ENCODE measurements at regions of chr17 and their contacts with region 1.

Region 1: DNA sequence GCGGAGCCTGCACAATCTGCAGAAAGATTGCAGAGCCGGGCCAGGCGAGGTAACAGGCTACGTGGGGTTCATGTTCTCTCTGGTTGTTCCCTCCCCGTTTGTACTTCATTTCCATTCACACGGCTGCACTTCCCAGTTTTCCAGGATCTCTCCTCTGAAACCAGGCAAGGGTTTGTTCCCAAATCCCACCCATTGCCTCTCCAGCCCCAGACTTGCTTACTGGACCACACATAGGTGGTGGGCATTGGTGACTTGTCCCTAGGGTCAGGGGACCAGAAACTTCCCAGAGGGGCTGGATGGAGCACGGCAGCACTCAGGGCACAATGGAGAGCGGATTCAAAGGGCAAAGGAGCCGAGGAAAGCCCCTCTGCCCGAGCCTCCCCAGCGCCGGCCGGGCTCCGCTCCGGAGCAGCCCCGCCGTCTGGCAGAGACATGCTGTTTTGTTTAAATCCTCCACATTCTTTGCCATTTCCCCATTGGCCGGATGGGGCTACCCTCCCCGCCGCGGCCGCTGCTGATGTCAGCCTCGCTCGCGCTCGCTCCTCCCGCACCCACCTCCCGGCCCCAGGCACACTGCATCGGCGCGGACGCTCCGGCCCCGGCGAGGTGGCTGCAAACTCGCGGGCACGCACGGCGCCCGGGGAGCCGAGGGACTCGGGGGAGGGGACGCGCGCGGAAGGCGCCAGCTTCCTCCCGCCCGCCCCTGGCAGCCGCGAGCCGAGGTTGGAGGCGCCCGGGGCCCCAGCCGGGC is at the start of gene PITPNC1:
- DNase-seq: peak; percentile 85
- H3K4me3 ChIP-seq: peak within 1 kb of the TSS; percentile 59 to 97 (median 96)
- H3K27ac ChIP-seq: peak within 1 kb of the TSS; percentile 72
- H3K4me1 ChIP-seq: peaks cover 12% of the 10 kb centered on the region
- H3K27me3 ChIP-seq: no peaks in the 10 kb centered on the region
- CTCF ChIP-seq: no peak
- total RNA-seq, gene PITPNC1: 5.7 to 35.8 TPM

Region 2: GRCh38 chr17:67276075-67276474 is 100.8 kb before region 1 on chr17:
- CTCF ChIA-PET with region 1: no interaction called
- dilution Hi-C with region 1: no loop called
- in situ Hi-C with region 1: no loop called
- intact Hi-C with region 1: loop called (anchors 5 kb)
- DNase-seq: no peak
- H3K4me3 ChIP-seq: no peak overlapping the region
- H3K27ac ChIP-seq: no peak overlapping the region
- H3K4me1 ChIP-seq: peaks cover 12% of the 10 kb centered on the region
- H3K27me3 ChIP-seq: no peaks in the 10 kb centered on the region
- CTCF ChIP-seq: peak; percentile 13 to 50

Region 3: GRCh38 chr17:67475236-67475937 is 98.5 kb after region 1 on chr17:
- CTCF ChIA-PET with region 1: interaction called, 6 read pairs
- dilution Hi-C with region 1: no loop called
- in situ Hi-C with region 1: no loop called
- intact Hi-C with region 1: loop called (anchors 1 kb)
- DNase-seq: peak; percentile 64
- H3K4me3 ChIP-seq: no peak overlapping the region
- H3K27ac ChIP-seq: no peak overlapping the region
- H3K4me1 ChIP-seq: peaks cover 24% of the 10 kb centered on the region
- H3K27me3 ChIP-seq: no peaks in the 10 kb centered on the region
- CTCF ChIP-seq: peak; percentile 99

Region 4: DNA sequence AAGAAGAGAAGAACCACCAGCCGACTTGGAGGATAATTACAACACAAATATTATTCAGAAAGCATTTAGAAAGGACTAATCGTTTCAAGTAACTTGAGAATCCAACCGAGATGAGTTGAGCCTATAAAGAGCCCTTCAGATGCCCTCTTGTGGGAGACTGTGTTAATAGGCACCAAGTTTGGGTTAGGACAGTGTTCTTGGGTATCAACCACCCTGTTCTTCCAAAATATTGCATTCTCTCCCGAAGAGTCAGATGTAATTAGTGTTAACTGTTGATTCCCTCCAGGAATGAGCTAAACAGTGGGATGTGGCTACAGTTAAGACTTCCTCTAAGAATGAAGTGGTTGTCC is 253.0 kb after region 1 on chr17:
- CTCF ChIA-PET with region 1: no interaction called
- dilution Hi-C with region 1: no loop called
- in situ Hi-C with region 1: loop called in 1 of 2 experiments (anchors 10 kb)
- intact Hi-C with region 1: loop called (anchors 1 kb)
- DNase-seq: peak; percentile 38
- H3K4me3 ChIP-seq: no peak overlapping the region
- H3K27ac ChIP-seq: no peak overlapping the region
- H3K4me1 ChIP-seq: no peaks in the 10 kb centered on the region
- H3K27me3 ChIP-seq: no peaks in the 10 kb centered on the region
- CTCF ChIP-seq: peak; percentile 29 to 50

Region 5: DNA sequence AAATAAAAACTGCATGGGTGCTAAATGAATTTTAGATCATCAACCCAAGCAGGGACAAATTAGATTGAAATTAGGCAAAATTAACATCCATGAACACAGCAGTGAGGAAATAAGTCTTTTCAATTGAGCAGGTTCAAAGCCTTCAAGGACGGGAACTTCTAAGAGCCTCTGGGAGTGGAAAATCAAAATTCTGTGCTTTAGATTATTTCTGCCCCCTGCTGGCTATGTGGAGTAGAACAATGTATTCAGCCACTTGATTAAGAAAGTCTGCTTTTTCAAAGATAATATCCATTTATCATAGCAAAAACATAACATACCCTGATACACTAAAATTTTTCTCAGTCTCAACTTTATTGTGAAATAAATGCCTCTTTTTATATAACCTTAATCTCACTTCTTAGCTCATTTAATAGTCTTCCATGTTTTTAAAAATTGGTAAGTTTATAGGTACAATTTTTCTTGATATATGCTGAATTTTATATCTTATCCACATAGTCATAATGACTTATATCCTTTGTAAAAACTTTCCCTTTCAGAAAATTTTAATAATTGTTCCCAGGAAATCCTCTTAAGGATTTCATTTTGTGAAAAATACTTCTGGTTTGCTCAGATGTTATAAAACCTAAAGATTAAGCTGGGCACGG is 312.7 kb after region 1 on chr17:
- CTCF ChIA-PET with region 1: no interaction called
- dilution Hi-C with region 1: no loop called
- in situ Hi-C with region 1: loop called (anchors 5 to 10 kb)
- intact Hi-C with region 1: loop called (anchors 1 kb)
- DNase-seq: peak; percentile 42
- H3K4me3 ChIP-seq: no peak overlapping the region
- H3K27ac ChIP-seq: no peak overlapping the region
- H3K4me1 ChIP-seq: no peaks in the 10 kb centered on the region
- H3K27me3 ChIP-seq: no peaks in the 10 kb centered on the region
- CTCF ChIP-seq: peak; percentile 67 to 73

Region 6: DNA sequence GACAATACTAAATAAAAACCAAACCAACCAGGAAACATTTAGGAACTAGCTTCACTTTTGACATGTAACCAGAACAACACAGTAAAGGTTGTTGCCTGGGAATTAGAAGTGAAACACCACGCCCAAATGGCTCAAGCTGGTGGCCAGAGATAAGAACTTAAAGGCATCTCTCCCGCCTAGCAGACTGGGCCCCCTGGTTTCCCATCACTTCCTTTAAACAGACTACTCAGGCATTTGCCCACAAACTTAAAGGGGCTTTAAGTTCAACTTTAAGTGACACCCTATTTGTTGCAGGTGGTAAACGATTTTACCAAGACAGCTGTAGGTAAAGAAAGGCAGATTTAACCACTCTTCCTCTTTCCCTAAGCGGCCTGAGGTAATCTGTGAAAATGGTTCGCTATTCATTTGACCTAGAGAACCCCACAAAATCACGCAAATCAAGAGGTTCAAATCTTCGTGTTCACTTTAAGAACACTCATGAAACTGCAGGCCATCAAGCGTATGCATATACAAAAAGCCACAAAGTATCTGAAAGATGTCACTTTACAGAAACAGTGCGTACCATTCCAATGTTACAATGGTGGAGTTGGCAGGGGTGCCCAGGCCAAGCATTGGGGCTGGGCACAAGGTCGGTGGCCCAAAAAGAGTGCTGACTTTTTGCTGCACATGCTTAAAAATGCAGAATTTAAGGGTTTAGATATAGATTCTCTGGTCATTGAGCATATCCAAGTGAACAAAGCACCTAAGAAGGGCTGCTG is 407.6 kb after region 1 on chr17:
- CTCF ChIA-PET with region 1: no interaction called
- dilution Hi-C with region 1: no loop called
- in situ Hi-C with region 1: no loop called
- intact Hi-C with region 1: loop called (anchors 5 kb)
- DNase-seq: no peak
- H3K4me3 ChIP-seq: no peak overlapping the region
- H3K27ac ChIP-seq: no peak overlapping the region
- H3K4me1 ChIP-seq: no peaks in the 10 kb centered on the region
- H3K27me3 ChIP-seq: no peaks in the 10 kb centered on the region
- CTCF ChIP-seq: no peak